Gastrocnemius medialis (tissue), 4 donors: ENCODE measurements at regions of chr11 and their contacts with region 1.

Region 1: DNA sequence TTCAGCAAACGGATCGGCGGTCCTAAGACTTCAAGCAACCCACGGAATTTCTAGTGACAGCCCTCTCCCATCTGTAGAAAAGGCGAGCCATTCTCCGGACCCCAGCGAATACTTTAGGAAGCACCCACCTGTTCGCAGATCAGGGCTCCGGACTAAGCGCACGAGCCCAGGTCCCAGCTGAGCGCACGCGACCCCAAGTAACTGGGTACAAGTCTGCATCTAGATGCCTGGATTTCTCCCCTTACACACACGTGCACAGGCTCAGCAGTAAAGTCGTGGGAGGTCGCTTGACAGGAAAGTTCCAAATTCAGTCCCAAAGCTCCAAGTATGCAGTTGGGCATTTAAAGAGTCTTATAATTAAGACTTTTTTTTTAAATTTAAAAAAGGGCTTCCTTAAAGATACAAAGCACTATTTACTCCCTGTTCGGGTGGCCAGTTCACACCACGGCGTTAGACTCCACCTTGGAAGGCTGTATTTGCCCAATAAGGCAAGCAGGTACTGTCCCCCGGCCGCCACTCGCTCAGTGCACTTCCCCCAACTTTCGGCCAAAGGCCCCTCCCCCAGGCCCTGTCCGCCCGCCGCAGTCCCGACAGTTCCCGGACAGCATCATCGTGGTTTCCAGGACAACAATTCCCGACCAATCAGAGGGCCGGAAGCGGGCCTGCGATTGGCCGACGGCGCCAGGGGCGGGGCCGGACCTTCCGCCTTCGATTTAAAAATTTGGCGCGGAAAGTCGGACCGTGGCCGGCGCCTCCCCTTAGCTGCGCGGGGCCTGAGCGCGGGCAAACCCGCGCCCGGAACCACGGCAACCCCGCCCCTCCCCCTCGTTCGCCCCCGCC is at the start of gene E2F8:
- DNase-seq: peak; percentile 93
- ATAC-seq: peak; percentile 91 to 93
- H3K4me3 ChIP-seq: peak within 1 kb of the TSS; percentile 63 to 76 (median 68)
- H3K27ac ChIP-seq: peak within 1 kb of the TSS; percentile 71 to 88 (median 74)
- H3K4me1 ChIP-seq: peaks cover 44 to 45% of the 10 kb centered on the region in 2 donors
- H3K27me3 ChIP-seq: peaks cover 15 to 22% (median 17%) of the 10 kb centered on the region in 3 donors
- CTCF ChIP-seq: no peak
- POLR2A ChIP-seq: peak in 1 of 2 donors; percentile 52
- total RNA-seq, gene E2F8: 0.39 to 0.80 (median 0.78) TPM in 3 of 4 donors, not detected in the other

Region 2: GRCh38 chr11:19116971-19117750 is 123.5 kb before region 1 on chr11 and contains the start of gene ZDHHC13:
- in situ Hi-C with region 1: no loop called
- intact Hi-C with region 1: loop called (anchors 5 kb)
- DNase-seq: peak; percentile 76 to 84
- ATAC-seq: peak; percentile 94 to 96
- H3K4me3 ChIP-seq: peak within 1 kb of the TSS; percentile 65 to 82 (median 72)
- H3K27ac ChIP-seq: peak within 1 kb of the TSS in 1 of 4 donors; percentile 49
- H3K4me1 ChIP-seq: peaks cover 3 to 6% of the 10 kb centered on the region in 2 donors
- H3K27me3 ChIP-seq: peaks cover 0 to 10% (median 6%) of the 10 kb centered on the region in 3 donors
- CTCF ChIP-seq: peak in 2 of 5 experiments; percentile 20 to 22
- POLR2A ChIP-seq: no peak
- total RNA-seq, gene ZDHHC13: 1.4 to 6.4 (median 3.5) TPM

Region 3: DNA sequence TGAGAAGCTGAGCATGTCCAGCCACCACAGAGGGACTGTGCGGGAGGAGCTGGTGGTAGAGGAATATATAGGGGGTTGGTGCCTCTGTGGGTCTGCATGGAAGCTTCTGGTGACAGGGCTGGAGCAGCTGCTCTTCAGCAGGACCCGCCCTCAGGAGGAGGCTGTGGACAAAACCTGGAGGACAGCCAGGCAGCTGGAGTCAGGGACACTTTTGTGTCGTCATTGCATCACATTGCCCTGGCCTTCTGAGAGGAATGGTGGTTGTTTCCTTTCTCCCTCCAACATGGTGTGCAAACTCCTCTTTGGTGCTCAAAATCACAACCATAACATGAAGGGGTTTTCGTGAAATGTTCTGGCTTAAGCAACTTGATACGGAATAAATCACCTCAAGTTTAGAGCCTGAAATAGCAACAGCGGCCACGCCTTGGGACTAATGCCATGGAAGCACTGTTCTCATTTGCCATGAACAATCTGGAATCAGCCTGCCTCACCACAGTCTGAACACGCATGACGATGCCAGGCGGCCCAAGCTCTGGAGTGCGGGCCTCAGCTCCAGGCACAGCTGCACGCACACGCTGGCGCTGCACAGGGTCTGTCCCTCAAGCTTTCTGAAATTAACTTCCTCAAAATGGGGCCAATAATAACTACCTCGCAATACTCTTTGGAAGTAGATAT is 21.7 kb before region 1 on chr11:
- in situ Hi-C with region 1: no loop called
- intact Hi-C with region 1: no loop called
- DNase-seq: peak; percentile 80 to 90
- ATAC-seq: peak; percentile 91 to 92
- H3K4me3 ChIP-seq: peak overlapping the region; percentile 39 to 65 (median 40)
- H3K27ac ChIP-seq: peak overlapping the region; percentile 86 to 94 (median 90)
- H3K4me1 ChIP-seq: peaks cover 38 to 45% of the 10 kb centered on the region in 2 donors
- H3K27me3 ChIP-seq: no peaks in the 10 kb centered on the region
- CTCF ChIP-seq: no peak
- POLR2A ChIP-seq: peak in 1 of 2 donors; percentile 32

Region 4: DNA sequence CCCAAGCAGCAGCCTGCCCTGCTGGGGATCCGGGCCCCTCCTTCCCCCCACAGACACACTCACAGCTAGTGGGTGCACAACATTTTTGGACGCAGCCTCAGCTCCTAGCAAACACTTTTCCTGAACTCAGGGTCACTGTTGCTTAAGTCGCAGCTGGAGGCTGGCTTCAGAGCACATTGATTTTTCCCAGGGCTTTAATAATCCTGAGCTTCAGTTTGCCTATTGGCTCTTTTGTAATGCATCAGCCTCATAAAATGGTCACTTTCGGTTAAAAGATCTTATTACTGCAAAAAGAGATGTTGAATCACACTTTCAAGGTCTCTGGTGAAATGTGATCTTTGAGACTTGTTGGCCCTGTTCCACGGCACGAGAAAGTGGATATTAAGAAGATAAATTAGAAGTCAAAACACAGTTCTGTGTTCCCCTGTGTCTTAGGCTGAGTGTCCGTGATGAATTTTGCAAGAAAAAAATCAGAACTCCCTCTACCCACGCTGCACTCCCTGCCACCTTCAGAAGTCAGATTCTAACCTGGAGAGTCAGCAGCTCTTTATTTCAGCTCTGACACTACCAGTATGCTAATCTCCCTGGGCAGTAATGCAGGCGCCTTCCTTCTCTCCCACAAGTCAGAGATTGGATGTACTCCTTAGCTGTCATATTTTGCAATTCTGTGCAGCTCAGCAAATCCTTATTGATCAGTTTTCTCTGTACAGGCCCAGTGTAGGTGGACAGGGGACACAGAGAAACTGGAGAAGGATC is 158.3 kb after region 1 on chr11:
- in situ Hi-C with region 1: no loop called
- intact Hi-C with region 1: no loop called
- DNase-seq: peak in 1 of 2 donors; percentile 26
- ATAC-seq: peak; percentile 74 to 76
- H3K4me3 ChIP-seq: no peak overlapping the region
- H3K27ac ChIP-seq: no peak overlapping the region
- H3K4me1 ChIP-seq: no peaks in the 10 kb centered on the region
- H3K27me3 ChIP-seq: no peaks in the 10 kb centered on the region
- CTCF ChIP-seq: no peak
- POLR2A ChIP-seq: no peak